ENCODE measurements at regions of chr19 and their contacts with region 1.

Region 1: DNA sequence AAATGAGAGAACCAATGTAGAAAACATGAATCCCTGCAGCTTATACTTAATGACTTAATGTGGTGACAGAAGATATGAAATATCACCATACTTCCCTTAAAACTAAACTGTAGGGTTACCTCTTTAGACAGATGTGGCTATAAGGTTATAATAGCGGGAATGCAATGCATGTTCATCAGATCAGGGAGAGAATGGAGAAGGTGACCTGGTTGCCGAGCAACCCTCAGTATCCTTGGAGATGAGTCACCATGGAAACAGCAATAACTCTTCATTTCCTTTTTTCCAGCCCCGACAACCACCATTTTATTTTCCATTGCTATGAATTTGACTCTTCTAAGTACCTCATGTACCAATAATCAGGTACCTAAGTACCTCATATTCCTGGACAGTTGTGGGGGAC is 28.0 kb upstream of the ZNF835 start:
- DNase-seq: no peak
- H3K4me3 ChIP-seq: no peak overlapping the region
- H3K27ac ChIP-seq: no peak overlapping the region
- H3K4me1 ChIP-seq: no peaks in the 10 kb centered on the region
- H3K27me3 ChIP-seq: no peaks in the 10 kb centered on the region
- CTCF ChIP-seq: no peak
- POLR2A ChIP-seq: no peak

Region 2: DNA sequence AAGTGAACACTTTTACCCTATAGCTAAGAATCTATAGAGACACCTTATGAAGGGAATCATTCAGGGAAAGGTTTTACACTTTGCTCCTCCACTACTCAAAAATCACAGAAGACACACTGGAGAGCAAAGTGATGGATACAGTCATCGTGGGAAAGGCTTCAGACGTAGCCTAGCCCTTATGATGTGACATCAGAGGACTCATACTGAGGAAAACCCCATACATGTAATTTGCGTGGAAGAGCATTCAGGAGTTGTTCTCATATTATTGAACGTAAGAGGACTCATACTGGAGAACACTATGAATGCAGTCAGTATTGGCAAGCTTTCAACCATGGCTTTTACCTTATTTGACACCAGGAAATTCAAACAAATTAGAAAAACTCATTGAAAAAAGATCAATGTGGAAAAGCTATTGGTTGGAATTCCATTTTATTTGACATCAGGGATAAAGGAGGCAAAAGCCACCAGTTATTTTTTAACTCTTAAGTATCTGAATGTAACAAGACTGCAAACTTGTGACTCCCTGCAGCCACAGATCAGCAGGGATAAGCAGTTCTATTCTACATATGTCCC is 1467.2 kb after region 1 on chr19:
- intact Hi-C with region 1: loop called (anchors 5 kb)
- DNase-seq: no peak
- H3K4me3 ChIP-seq: no peak overlapping the region
- H3K27ac ChIP-seq: no peak overlapping the region
- H3K4me1 ChIP-seq: no peaks in the 10 kb centered on the region
- H3K27me3 ChIP-seq: no peaks in the 10 kb centered on the region
- CTCF ChIP-seq: no peak
- POLR2A ChIP-seq: no peak

Measured in uterus (tissue), 4 donors.